Natural killer cell (primary cell): ENCODE measurements at regions of chr20 and their contacts with region 1.

Region 1: GRCh38 chr20:53869466-53870258 is 200.7 kb downstream of the BCAS1 start:
- DNase-seq: peak; percentile 41 to 90
- ATAC-seq: peak; percentile 86 to 88 (median 87)
- H3K4me3 ChIP-seq: no peak overlapping the region
- H3K4me3 Mint-ChIP-seq: peak overlapping the region; percentile 50
- H3K27ac ChIP-seq: peak overlapping the region; percentile 40
- H3K27ac Mint-ChIP-seq: peak overlapping the region; percentile 69 to 79
- H3K4me1 ChIP-seq: peaks cover 37% of the 10 kb centered on the region
- H3K4me1 Mint-ChIP-seq: peaks cover 54 to 63% of the 10 kb centered on the region in 2 donors
- H3K27me3 ChIP-seq: no peaks in the 10 kb centered on the region
- H3K27me3 Mint-ChIP-seq: no peaks in the 10 kb centered on the region
- CTCF ChIP-seq: peak; percentile 84

Region 2: GRCh38 chr20:53828682-53829254 is 40.9 kb before region 1 on chr20:
- intact Hi-C with region 1: loop called (anchors 10 kb)
- DNase-seq: peak in 1 of 2 donors; percentile 40
- ATAC-seq: peak in 2 of 3 donors; percentile 22 to 32
- H3K4me3 ChIP-seq: peak overlapping the region; percentile 21
- H3K4me3 Mint-ChIP-seq: peak overlapping the region; percentile 88
- H3K27ac ChIP-seq: peak overlapping the region; percentile 74
- H3K27ac Mint-ChIP-seq: peak overlapping the region; percentile 84 to 93
- H3K4me1 ChIP-seq: peaks cover 18% of the 10 kb centered on the region
- H3K4me1 Mint-ChIP-seq: peaks cover 43 to 45% of the 10 kb centered on the region in 2 donors
- H3K27me3 ChIP-seq: no peaks in the 10 kb centered on the region
- H3K27me3 Mint-ChIP-seq: no peaks in the 10 kb centered on the region
- CTCF ChIP-seq: no peak

Region 3: GRCh38 chr20:53839423-53840176 is 30.1 kb before region 1 on chr20:
- intact Hi-C with region 1: loop called (anchors 2 kb)
- DNase-seq: peak; percentile 61 to 85
- ATAC-seq: peak; percentile 51 to 82 (median 74)
- H3K4me3 ChIP-seq: no peak overlapping the region
- H3K4me3 Mint-ChIP-seq: peak overlapping the region; percentile 96
- H3K27ac ChIP-seq: peak overlapping the region; percentile 69
- H3K27ac Mint-ChIP-seq: peak overlapping the region; percentile 84 to 89
- H3K4me1 ChIP-seq: peaks cover 84% of the 10 kb centered on the region
- H3K4me1 Mint-ChIP-seq: peaks cover 72% of the 10 kb centered on the region in 2 donors
- H3K27me3 ChIP-seq: no peaks in the 10 kb centered on the region
- H3K27me3 Mint-ChIP-seq: no peaks in the 10 kb centered on the region
- CTCF ChIP-seq: no peak

Region 4: DNA sequence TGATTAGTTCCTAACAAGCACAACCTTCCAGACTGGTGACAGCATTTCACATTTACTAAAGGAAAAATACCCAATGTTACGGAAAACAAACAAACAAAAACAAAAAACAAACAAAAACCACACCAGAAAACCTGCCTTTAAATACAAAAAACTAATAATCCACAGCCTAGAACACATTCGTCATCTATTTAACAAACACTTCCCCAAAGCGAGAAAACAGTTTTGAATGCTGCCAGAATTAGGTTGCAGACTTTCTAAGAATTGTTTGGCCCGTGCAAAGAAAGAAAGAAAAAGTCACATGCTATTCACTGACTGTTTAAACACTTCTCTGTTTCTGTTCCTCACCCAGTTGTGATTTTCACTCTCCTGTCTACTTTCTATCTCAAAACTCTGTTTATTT is 148.1 kb after region 1 on chr20:
- intact Hi-C with region 1: no loop called
- DNase-seq: no peak
- ATAC-seq: no peak
- H3K4me3 ChIP-seq: no peak overlapping the region
- H3K4me3 Mint-ChIP-seq: no peak overlapping the region
- H3K27ac ChIP-seq: no peak overlapping the region
- H3K27ac Mint-ChIP-seq: peak overlapping the region in 1 of 2 donors; percentile 18
- H3K4me1 ChIP-seq: no peaks in the 10 kb centered on the region
- H3K4me1 Mint-ChIP-seq: peaks cover 8 to 9% of the 10 kb centered on the region in 2 donors
- H3K27me3 ChIP-seq: no peaks in the 10 kb centered on the region
- H3K27me3 Mint-ChIP-seq: peaks cover 0 to 2% of the 10 kb centered on the region in 2 donors
- CTCF ChIP-seq: no peak